MCF 10A (cell line): ENCODE measurements at regions of chr3 and their contacts with region 1.

Region 1: DNA sequence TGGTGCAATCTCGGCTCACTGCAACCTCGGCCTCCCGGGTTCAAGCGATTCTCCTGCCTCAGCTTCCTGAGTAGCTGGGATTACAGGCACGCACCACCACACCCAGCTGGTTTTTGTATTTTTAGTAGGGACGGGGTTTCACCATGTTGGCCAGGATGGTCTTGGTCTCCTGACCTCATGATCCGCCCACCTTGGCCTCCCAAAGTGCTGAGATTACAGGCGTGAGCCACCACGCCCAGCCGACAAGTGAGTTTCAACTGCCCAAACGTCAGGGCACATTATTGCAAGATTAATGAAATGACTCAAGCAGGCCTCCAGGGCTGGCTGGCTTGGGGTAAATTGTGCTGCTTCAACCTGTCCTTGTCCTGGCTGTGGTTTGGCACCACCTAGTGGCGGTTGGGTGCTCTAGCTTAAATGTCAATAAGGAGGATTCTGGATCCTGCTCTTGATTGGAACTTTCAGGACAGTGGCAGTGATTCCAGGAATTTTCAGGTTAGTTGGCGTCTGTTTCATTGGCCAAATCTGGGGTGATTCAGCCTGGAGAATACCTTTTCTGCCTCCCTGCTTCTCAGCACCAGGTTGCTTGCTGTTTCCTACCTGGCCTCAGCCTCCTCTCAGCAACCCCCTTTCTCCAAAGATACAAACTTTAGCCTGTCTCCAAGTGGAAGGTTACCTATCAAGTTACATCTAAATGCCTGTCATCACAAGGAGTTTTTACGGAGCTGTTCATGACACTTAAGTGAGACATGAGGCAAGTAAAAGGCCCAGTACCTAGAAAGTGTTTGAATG is 32.4 kb upstream of the SACM1L start:
- DNase-seq: peak; percentile 97
- H3K4me3 Mint-ChIP-seq: no peak overlapping the region
- H3K27ac Mint-ChIP-seq: peak overlapping the region; percentile 19
- H3K4me1 Mint-ChIP-seq: peaks cover 19% of the 10 kb centered on the region
- H3K27me3 Mint-ChIP-seq: no peaks in the 10 kb centered on the region
- CTCF ChIP-seq: peak; percentile 92

Region 2: DNA sequence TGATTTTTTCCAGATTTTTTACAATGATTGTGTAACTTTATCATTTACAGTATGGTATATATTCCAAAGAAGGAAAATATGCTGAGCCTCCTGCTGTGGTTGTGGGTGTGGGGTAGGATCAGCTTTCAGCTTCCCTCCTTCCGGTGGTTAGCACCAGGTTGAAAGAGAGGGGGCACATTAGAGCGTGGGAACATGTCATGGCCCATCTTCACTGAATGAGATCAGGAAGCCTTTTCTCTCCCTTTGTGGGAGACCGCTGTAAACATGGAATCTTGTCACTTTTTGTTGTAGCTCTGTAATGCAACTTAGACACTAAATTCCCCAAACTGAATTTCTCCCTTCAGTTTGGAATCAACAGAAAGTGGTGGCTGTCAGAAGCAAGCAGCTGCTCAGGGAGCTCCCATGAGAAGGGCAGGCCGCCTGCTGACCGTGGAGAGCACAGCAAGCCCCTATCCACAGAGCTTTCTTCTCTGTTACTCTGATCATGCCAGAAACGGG is 148.9 kb before region 1 on chr3:
- CTCF ChIA-PET with region 1: interaction called, 57 read pairs
- POLR2A ChIA-PET with region 1: interaction called, 4 read pairs
- intact Hi-C with region 1: loop called (anchors 1 kb)
- DNase-seq: no peak
- H3K4me3 Mint-ChIP-seq: no peak overlapping the region
- H3K27ac Mint-ChIP-seq: no peak overlapping the region
- H3K4me1 Mint-ChIP-seq: no peaks in the 10 kb centered on the region
- H3K27me3 Mint-ChIP-seq: no peaks in the 10 kb centered on the region
- CTCF ChIP-seq: no peak

Region 3: GRCh38 chr3:45528429-45528828 is 128.3 kb before region 1 on chr3:
- CTCF ChIA-PET with region 1: interaction called, 8 read pairs
- POLR2A ChIA-PET with region 1: no interaction called
- intact Hi-C with region 1: loop called (anchors 5 kb)
- DNase-seq: no peak
- H3K4me3 Mint-ChIP-seq: no peak overlapping the region
- H3K27ac Mint-ChIP-seq: peak overlapping the region; percentile 51
- H3K4me1 Mint-ChIP-seq: no peaks in the 10 kb centered on the region
- H3K27me3 Mint-ChIP-seq: no peaks in the 10 kb centered on the region
- CTCF ChIP-seq: no peak

Region 4: GRCh38 chr3:45582430-45582829 is 74.3 kb before region 1 on chr3:
- CTCF ChIA-PET with region 1: interaction called, 14 read pairs
- POLR2A ChIA-PET with region 1: interaction called, 3 read pairs
- intact Hi-C with region 1: no loop called
- DNase-seq: no peak
- H3K4me3 Mint-ChIP-seq: no peak overlapping the region
- H3K27ac Mint-ChIP-seq: no peak overlapping the region
- H3K4me1 Mint-ChIP-seq: peaks cover 5% of the 10 kb centered on the region
- H3K27me3 Mint-ChIP-seq: no peaks in the 10 kb centered on the region
- CTCF ChIP-seq: no peak

Region 5: GRCh38 chr3:45644063-45644790 is 12.5 kb before region 1 on chr3:
- CTCF ChIA-PET with region 1: interaction called, 10 read pairs
- POLR2A ChIA-PET with region 1: interaction called, 8 read pairs
- intact Hi-C with region 1: no loop called
- DNase-seq: peak; percentile 69
- H3K4me3 Mint-ChIP-seq: peak overlapping the region; percentile 12
- H3K27ac Mint-ChIP-seq: peak overlapping the region; percentile 92
- H3K4me1 Mint-ChIP-seq: peaks cover 41% of the 10 kb centered on the region
- H3K27me3 Mint-ChIP-seq: no peaks in the 10 kb centered on the region
- CTCF ChIP-seq: no peak

Region 6: GRCh38 chr3:45688882-45689756 is 32.4 kb after region 1 on chr3 and contains the start of gene SACM1L:
- CTCF ChIA-PET with region 1: interaction called, 11 read pairs
- POLR2A ChIA-PET with region 1: interaction called, 17 read pairs
- intact Hi-C with region 1: no loop called
- DNase-seq: peak; percentile 98
- H3K4me3 Mint-ChIP-seq: peak within 1 kb of the TSS; percentile 74
- H3K27ac Mint-ChIP-seq: peak within 1 kb of the TSS; percentile 30
- H3K4me1 Mint-ChIP-seq: peaks cover 25% of the 10 kb centered on the region
- H3K27me3 Mint-ChIP-seq: no peaks in the 10 kb centered on the region
- CTCF ChIP-seq: no peak
- total RNA-seq, gene SACM1L: 39.3 and 44.5 TPM in 2 replicates

Region 7: GRCh38 chr3:45817831-45818522 is 161.2 kb after region 1 on chr3:
- CTCF ChIA-PET with region 1: no interaction called
- POLR2A ChIA-PET with region 1: no interaction called
- intact Hi-C with region 1: no loop called
- DNase-seq: peak; percentile 97
- H3K4me3 Mint-ChIP-seq: no peak overlapping the region
- H3K27ac Mint-ChIP-seq: peak overlapping the region; percentile 73
- H3K4me1 Mint-ChIP-seq: peaks cover 28% of the 10 kb centered on the region
- H3K27me3 Mint-ChIP-seq: no peaks in the 10 kb centered on the region
- CTCF ChIP-seq: no peak